SK-N-SH (cell line): ENCODE measurements at regions of chr6 and their contacts with region 1.

Region 1: GRCh38 chr6:34154668-34155447 is 9.0 kb upstream of the GRM4 start:
- DNase-seq: peak; percentile 98
- H3K4me3 ChIP-seq: peak overlapping the region; percentile 17 to 59; a peak in 2 of 4 replicates
- H3K27ac ChIP-seq: no peak overlapping the region
- H3K4me1 ChIP-seq: peaks cover 0 to 2% of the 10 kb centered on the region in 2 experiments; a peak in 1 of 4 replicates
- H3K27me3 ChIP-seq: peaks cover 25% of the 10 kb centered on the region
- CTCF ChIP-seq: peak; percentile 89
- EP300 ChIP-seq: no peak
- RAD21 ChIP-seq: peak; percentile 95

Region 2: DNA sequence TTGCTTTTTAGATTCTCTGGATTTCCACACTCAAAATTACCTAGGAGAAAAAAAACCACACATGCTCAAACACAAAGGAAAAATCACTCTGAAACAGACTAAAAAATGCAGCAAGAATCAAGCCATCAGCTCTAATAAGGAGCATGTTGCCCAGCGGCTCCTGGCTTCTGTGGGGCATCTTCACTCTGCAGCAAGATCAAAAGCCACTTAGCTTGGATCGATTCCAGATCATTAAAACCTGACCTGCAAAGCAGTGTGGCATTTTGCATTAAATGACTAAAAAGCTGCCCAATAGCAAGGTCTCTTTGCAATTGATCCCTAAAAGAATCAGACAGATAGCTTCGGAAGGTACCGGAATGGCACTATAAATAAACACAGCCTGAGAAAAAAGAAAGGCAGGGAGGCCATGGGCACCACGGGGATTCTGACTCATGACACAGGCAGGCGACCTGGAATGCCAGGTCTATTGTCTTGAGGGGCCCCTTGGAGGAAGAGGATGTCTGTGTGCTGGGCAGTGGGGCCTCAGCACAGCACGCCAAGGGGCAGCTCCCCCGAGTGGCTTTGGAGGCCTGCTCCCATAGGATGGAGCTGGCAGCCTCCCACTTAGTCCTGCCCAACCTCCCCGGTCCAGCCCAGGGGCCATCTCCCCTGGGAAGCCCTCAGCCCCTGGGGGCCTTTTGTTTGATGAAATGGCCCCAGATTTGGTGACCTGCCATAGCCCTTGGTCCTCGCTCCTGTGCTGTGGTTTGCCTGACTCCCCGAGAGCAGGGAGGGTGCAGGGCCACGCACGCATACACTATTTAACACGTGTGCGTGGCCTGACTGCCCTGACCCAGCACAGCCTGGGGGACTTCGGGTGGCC is 373.5 kb before region 1 on chr6:
- CTCF ChIA-PET with region 1: interaction called, 28 read pairs
- POLR2A ChIA-PET with region 1: no interaction called
- DNase-seq: no peak
- H3K4me3 ChIP-seq: no peak overlapping the region
- H3K27ac ChIP-seq: peak overlapping the region; percentile 73 to 79
- H3K4me1 ChIP-seq: peaks cover 25 to 36% of the 10 kb centered on the region in 2 experiments
- H3K27me3 ChIP-seq: no peaks in the 10 kb centered on the region
- CTCF ChIP-seq: no peak
- EP300 ChIP-seq: peak in 1 of 2 experiments; percentile 62; a peak in 1 of 4 replicates
- RAD21 ChIP-seq: no peak

Region 3: DNA sequence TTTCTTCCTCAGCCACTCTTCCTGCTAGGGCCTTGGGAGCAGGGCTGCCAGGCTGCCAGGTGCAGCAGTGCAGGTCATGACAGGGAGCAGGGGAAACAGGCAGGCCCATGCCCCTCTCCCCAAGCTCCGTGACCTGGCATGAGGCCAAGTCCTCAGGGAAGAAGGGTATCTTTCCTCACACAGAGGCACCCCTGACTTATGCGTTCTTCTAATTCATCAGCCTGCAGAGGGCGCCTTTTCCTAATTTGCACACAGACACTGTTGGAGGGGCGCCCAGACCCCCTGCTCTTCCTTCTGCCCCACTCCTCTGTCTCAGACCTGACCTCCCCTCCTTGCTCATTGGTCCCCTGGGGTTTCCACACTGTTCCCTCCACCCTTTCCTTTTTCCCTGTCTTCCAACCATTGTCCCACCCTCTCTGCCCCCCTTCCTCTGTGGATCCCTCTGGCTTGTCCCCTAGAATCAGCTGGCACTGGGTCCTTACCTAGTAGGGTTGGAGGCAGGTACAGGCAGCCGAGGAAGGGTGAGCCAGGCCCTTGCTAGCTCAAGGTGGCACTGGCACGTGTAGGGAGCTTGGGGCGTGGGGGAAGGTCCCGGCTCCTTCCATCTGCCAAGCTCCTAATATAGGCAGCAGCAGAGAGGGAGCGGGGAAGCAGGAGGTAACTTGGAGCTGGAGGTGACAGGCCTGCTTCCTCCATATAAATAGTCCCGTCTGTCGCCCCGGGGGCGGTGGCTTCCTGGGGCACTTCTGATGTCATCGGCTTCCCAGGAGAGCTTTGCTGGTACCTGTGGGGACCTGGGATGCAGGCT is 196.1 kb before region 1 on chr6:
- CTCF ChIA-PET with region 1: interaction called, 10 read pairs
- POLR2A ChIA-PET with region 1: no interaction called
- DNase-seq: peak; percentile 56
- H3K4me3 ChIP-seq: no peak overlapping the region; a peak in 1 of 4 replicates
- H3K27ac ChIP-seq: no peak overlapping the region
- H3K4me1 ChIP-seq: peaks cover 0 to 10% of the 10 kb centered on the region in 2 experiments; a peak in 1 of 4 replicates
- H3K27me3 ChIP-seq: no peaks in the 10 kb centered on the region
- CTCF ChIP-seq: peak; percentile 40
- EP300 ChIP-seq: no peak
- RAD21 ChIP-seq: no peak; the same call in 1 of the 2 replicates

Region 4: GRCh38 chr6:34044945-34045595 is 109.8 kb before region 1 on chr6:
- CTCF ChIA-PET with region 1: interaction called, 13 read pairs
- POLR2A ChIA-PET with region 1: no interaction called
- DNase-seq: no peak
- H3K4me3 ChIP-seq: no peak overlapping the region
- H3K27ac ChIP-seq: peak overlapping the region in 1 of 2 experiments; percentile 31; a peak in 1 of 4 replicates
- H3K4me1 ChIP-seq: peaks cover 0 to 20% of the 10 kb centered on the region in 2 experiments; a peak in 1 of 4 replicates
- H3K27me3 ChIP-seq: peaks cover 14% of the 10 kb centered on the region; the same call in 1 of the 2 replicates
- CTCF ChIP-seq: no peak
- EP300 ChIP-seq: no peak
- RAD21 ChIP-seq: no peak

Region 5: DNA sequence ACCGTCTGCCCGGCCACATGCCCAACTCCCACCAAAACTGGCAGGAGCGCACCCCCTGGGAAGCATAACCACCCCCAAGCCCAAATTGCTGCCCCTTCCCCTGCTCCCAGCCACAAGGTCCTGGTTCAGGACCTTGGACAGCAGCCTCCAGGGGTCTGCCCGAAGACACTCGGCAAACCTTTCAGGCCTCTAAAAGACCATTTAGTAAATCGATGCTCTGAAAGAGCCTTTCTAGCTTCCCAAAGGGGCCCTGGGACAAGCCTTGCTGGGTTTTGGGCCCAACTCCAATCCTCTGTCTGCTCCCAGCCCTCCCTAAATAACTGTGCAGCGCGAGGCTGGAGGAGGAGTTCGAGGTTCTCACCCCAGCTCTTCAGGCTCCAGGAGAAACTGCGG is 39.5 kb before region 1 on chr6:
- CTCF ChIA-PET with region 1: interaction called, 13 read pairs
- POLR2A ChIA-PET with region 1: no interaction called
- DNase-seq: no peak
- H3K4me3 ChIP-seq: no peak overlapping the region
- H3K27ac ChIP-seq: no peak overlapping the region
- H3K4me1 ChIP-seq: peaks cover 0 to 4% of the 10 kb centered on the region in 2 experiments; a peak in 1 of 4 replicates
- H3K27me3 ChIP-seq: no peaks in the 10 kb centered on the region; the same call in 1 of the 2 replicates
- CTCF ChIP-seq: no peak
- EP300 ChIP-seq: no peak
- RAD21 ChIP-seq: no peak